ENCODE measurements at regions of chr14 and their contacts with region 1.

Region 1: DNA sequence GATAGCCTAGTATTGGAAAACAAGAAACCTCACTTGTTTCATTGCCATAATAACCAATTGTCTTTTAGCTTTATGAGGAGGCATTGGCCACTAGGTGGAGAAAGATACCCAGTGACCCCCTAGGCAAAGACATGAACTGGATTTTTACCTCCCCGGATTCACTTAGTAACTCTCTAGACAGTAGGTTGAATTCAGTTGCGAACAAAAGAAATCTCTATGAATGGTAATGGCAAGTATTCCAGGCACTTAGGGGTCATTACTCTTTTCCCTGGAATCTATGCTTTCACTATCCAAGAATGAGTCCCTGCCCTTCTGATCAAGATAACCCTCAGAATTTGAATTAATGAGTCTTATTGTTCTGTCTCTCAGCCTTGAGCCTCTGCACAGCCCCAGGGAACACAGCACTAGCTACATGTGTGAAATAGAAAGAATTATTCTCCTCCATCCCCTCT is 29.5 kb upstream of the RHOJ start:
- DNase-seq: peak in 1 of 2 donors; percentile 51
- ATAC-seq: peak in 7 of 8 donors; percentile 61 to 83 (median 74)
- H3K4me3 ChIP-seq: no peak overlapping the region
- H3K27ac ChIP-seq: peak overlapping the region in 1 of 10 donors; percentile 2
- H3K4me1 ChIP-seq: peaks cover 0 to 21% (median 14%) of the 10 kb centered on the region in 9 donors
- H3K27me3 ChIP-seq: no peaks in the 10 kb centered on the region
- CTCF ChIP-seq: peak; percentile 57 to 84 (median 70)

Region 2: DNA sequence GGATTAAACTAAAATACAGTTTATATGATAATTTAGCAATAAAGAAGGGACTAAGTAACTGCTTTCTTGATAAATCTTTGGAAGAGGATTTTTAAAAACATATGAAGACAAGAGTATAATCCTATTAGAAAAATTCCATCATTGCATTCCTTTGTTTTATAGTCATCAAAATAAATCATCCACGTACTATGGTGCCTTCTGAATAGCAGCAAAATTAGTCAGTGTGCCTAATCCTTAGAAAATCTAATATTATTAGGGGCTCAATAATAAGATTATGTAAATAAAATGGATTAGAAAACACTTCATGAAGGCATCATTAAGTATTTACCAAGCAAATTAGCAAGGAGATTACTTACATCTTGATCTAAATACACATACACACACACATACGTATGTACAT is 231.6 kb before region 1 on chr14:
- intact Hi-C with region 1: no loop called
- DNase-seq: no peak
- ATAC-seq: no peak
- H3K4me3 ChIP-seq: no peak overlapping the region
- H3K27ac ChIP-seq: no peak overlapping the region
- H3K4me1 ChIP-seq: no peaks in the 10 kb centered on the region
- H3K27me3 ChIP-seq: no peaks in the 10 kb centered on the region
- CTCF ChIP-seq: no peak

Region 3: GRCh38 chr14:63375771-63376170 is 201.0 kb after region 1 on chr14:
- intact Hi-C with region 1: loop called in 1 of 10 experiments (anchors 10 kb)
- DNase-seq: no peak
- ATAC-seq: no peak
- H3K4me3 ChIP-seq: no peak overlapping the region
- H3K27ac ChIP-seq: no peak overlapping the region
- H3K4me1 ChIP-seq: no peaks in the 10 kb centered on the region
- H3K27me3 ChIP-seq: no peaks in the 10 kb centered on the region
- CTCF ChIP-seq: no peak

Measured in heart right ventricle (tissue), 16 donors.